WTC11 (cell line): ENCODE measurements at regions of chr16 and their contacts with region 1.

Region 1: DNA sequence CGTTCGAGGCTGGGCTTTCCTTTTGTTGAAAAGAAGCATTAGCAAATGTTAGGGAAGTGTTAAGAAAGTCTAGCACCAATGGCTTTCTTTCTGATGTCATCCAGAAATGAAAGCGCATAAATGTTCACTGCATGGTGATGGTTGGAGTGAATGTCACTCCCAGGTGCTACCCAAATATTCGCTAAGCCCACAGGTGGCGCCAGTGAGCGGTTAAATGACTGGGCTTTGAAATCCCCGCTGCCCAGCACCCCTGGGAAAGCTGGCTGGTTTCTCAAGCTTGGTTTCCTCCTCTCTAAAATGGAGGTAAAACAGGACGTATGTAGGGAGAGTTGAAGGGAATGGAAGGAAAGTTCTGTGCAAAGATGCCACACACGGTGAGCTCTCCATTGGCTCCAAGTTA is 104.4 kb downstream of the IRX5 start:
- DNase-seq: peak; percentile 83
- ATAC-seq: peak; percentile 77
- H3K4me3 Mint-ChIP-seq: no peak overlapping the region
- H3K27ac Mint-ChIP-seq: no peak overlapping the region
- H3K4me1 Mint-ChIP-seq: no peaks in the 10 kb centered on the region
- H3K27me3 Mint-ChIP-seq: no peaks in the 10 kb centered on the region; the same call in 1 of the 2 replicates
- CTCF ChIP-seq: peak; percentile 65

Region 2: DNA sequence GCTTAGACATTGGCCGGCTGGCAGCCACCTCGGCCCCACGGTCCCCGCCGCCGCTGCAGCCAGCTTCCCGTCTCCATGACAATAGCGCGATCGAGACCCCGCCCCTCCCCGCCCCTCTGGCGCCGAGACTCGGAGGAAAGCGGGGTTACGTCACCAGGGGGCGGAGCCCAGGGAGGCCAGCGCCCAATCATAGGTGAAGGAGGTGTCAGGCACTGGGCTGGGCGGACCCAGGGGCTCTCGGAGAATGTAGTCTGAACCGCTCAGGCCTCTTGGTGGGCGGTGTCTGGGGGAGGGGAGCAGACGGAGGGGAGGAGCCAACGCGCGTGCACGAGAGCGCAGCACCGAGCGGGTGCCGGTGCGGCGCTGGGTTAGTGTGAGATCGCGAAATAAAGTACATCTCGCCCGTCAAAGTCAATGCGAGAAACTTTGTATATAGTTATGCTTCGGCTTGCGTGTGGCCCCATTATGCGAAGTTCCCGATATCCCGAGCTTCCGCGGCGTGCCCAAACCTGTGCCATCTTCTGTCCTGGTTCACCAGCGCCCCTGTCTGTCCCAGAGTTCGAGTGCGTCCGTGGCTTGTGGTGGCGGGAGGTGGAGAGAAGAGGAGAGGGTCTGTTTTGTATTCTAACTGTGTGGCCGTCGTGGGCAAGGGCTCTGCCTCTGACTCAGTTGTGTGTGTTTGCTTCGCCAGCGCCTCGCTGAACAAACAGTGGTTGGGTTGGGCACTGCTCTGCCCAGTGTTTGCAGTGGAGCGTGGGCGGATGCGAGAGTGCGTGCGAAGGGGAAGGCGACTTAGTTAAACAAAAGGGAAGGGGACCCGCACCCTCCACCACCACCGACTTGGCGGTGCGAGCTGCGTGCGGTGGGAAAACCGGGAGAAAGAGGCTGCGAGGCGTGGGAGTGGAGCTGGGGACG is 105.7 kb before region 1 on chr16:
- CTCF ChIA-PET with region 1: no interaction called
- POLR2A ChIA-PET with region 1: no interaction called
- DNase-seq: peak; percentile 100
- ATAC-seq: peak; percentile 89
- H3K4me3 Mint-ChIP-seq: peak overlapping the region; percentile 97
- H3K27ac Mint-ChIP-seq: peak overlapping the region; percentile 53; the same call in 1 of the 2 replicates
- H3K4me1 Mint-ChIP-seq: peaks cover 32% of the 10 kb centered on the region
- H3K27me3 Mint-ChIP-seq: peaks cover 85% of the 10 kb centered on the region
- CTCF ChIP-seq: no peak

Region 3: DNA sequence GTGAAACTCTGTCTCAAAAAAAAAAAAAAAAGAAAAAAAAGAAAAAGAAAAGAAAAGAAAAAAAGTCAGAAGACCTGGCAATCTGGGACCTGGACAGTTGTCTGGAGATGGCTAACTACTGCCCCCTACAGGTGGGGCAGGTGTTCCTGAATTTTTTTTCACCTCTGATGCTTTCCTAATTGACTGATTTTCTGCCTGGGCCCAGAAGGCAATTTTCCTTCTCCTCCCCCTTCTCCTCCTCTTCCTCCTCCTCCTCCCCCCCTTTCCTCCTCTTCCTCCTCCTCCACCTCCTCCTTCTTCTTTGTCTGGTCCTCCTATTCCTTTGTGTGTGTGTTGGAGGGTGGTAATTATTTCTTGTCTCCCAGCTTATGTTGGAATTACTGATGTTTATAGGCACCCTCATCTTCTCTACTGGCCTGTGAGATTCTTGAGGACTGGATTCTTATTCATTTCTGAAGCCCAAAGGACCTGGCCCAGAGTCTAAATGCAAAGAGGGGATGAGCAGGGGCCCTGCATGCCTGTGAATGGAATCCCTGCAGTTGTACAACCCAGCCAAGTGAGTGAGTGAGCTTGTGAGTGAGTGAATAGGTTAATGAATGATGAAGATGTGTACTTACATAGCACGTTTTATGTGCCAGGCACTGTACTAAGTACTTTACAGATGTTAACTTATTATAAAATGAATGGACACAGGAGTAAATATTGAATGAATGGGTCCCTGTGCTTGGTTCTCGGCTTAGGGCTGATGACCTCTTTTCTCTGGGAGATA is 77.4 kb before region 1 on chr16:
- CTCF ChIA-PET with region 1: interaction called, 15 read pairs
- POLR2A ChIA-PET with region 1: no interaction called
- DNase-seq: peak; percentile 61
- ATAC-seq: no peak
- H3K4me3 Mint-ChIP-seq: no peak overlapping the region
- H3K27ac Mint-ChIP-seq: no peak overlapping the region
- H3K4me1 Mint-ChIP-seq: peaks cover 2% of the 10 kb centered on the region
- H3K27me3 Mint-ChIP-seq: peaks cover 4% of the 10 kb centered on the region
- CTCF ChIP-seq: peak; percentile 61

Region 4: DNA sequence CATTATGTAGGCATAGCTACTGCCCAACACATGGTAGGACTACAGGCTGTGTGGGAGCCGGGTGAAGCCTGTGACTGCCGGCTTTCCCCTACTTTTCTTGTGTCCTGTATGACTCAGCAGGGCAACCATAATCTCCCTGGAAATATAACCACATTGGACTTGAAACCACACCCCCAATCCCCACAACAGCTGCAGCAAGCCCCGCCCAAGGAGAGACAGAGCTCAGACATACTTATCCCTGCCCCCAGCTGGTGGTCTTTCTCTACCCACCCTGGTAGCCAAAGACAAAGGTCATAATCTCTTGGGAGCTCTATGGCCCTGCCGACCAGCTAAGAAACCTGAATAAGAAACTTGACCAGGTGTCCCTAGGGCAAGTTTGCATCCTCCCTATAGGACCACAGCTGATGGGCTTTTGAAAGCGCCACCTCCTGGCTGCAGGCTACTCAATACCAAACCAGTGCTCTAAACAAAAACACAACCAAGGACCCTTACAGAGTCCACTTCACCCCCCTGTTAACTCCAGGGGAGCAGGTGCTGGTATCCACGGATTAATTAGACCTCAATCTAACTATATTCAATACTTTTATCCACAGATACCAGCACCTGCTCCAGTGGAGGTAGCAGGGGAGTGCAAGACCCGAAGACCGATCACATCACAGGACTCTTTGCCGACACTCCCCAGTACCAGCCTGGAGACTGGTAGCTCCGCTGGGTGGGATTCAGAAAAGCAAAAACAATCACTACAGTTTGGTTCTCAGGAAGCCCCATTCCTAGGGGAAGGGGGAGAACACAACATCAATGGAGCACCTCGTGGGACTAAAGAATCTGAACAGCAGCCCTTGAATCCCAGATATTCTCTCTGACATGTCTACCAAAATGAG is 13.2 kb before region 1 on chr16:
- CTCF ChIA-PET with region 1: interaction called, 45 read pairs
- POLR2A ChIA-PET with region 1: no interaction called
- DNase-seq: peak; percentile 52
- ATAC-seq: peak; percentile 94
- H3K4me3 Mint-ChIP-seq: peak overlapping the region; percentile 34; the same call in 1 of the 2 replicates
- H3K27ac Mint-ChIP-seq: no peak overlapping the region
- H3K4me1 Mint-ChIP-seq: peaks cover 5% of the 10 kb centered on the region; the same call in 1 of the 2 replicates
- H3K27me3 Mint-ChIP-seq: no peaks in the 10 kb centered on the region
- CTCF ChIP-seq: no peak

Region 5: GRCh38 chr16:55051571-55051970 is 16.5 kb after region 1 on chr16:
- CTCF ChIA-PET with region 1: interaction called, 19 read pairs
- POLR2A ChIA-PET with region 1: no interaction called
- DNase-seq: no peak
- ATAC-seq: no peak
- H3K4me3 Mint-ChIP-seq: no peak overlapping the region
- H3K27ac Mint-ChIP-seq: no peak overlapping the region
- H3K4me1 Mint-ChIP-seq: peaks cover 5% of the 10 kb centered on the region
- H3K27me3 Mint-ChIP-seq: peaks cover 15% of the 10 kb centered on the region
- CTCF ChIP-seq: no peak

Region 6: DNA sequence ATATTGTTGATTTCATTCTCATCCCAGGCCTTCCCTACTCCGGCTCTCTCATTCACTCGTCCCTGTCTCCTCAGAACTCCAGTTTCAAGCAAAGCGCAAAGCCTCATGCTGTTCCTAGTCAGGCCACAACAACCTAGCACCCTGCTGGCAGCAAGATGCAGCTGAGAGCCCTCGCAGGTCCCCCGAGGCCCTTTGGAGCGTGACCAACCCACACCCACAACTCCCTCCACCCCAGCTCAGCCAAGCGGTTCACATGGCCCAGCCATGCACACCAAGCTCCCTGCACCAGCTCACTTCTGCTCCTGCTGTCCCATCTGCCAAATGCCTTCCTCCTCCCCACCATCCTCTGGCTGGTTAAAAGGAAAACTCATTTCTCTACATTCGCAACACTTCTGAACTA is 91.4 kb after region 1 on chr16:
- CTCF ChIA-PET with region 1: no interaction called
- POLR2A ChIA-PET with region 1: no interaction called
- DNase-seq: no peak
- ATAC-seq: no peak
- H3K4me3 Mint-ChIP-seq: no peak overlapping the region
- H3K27ac Mint-ChIP-seq: no peak overlapping the region
- H3K4me1 Mint-ChIP-seq: no peaks in the 10 kb centered on the region
- H3K27me3 Mint-ChIP-seq: no peaks in the 10 kb centered on the region
- CTCF ChIP-seq: no peak

Region 7: DNA sequence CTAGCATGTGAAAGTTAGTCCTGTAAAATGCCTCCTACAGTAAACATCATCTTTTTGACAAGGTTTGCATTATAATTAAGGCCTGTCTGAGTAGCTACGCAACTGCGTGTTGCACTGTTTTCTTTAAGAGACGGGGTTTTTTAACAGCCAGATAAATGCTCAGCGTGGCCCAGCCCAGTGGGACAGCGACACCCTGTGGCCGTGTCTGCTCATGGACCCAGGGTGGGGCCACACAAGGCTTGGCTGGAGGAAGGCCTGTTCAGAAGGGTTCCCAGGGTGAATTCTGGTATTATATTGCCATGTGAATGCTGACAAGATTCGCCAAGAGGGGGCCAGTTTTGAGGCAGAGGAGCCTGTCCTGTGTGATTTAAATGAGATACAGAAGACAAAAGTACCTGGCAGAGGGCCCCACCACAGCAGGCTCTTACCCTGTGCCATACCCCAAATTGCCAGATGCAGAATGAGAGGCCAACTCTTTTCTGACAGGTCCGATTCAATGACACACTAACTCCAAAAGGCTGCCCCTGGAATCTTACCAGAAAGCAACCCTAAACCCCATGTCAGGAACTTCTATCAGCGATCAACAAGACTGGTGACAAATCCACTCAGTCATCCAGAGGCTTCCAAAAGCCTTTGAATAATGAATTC is 223.1 kb after region 1 on chr16:
- CTCF ChIA-PET with region 1: interaction called, 19 read pairs
- POLR2A ChIA-PET with region 1: no interaction called
- DNase-seq: peak; percentile 84
- ATAC-seq: peak; percentile 95
- H3K4me3 Mint-ChIP-seq: no peak overlapping the region
- H3K27ac Mint-ChIP-seq: no peak overlapping the region
- H3K4me1 Mint-ChIP-seq: no peaks in the 10 kb centered on the region
- H3K27me3 Mint-ChIP-seq: no peaks in the 10 kb centered on the region
- CTCF ChIP-seq: peak; percentile 91

Region 8: GRCh38 chr16:55370762-55371482 is 335.9 kb after region 1 on chr16:
- CTCF ChIA-PET with region 1: interaction called, 11 read pairs
- POLR2A ChIA-PET with region 1: no interaction called
- DNase-seq: peak; percentile 73
- ATAC-seq: peak; percentile 97
- H3K4me3 Mint-ChIP-seq: peak overlapping the region; percentile 41
- H3K27ac Mint-ChIP-seq: no peak overlapping the region
- H3K4me1 Mint-ChIP-seq: peaks cover 17% of the 10 kb centered on the region
- H3K27me3 Mint-ChIP-seq: peaks cover 24% of the 10 kb centered on the region
- CTCF ChIP-seq: no peak